B cell (primary cell): ENCODE measurements at regions of chr12 and their contacts with region 1.

Region 1: GRCh38 chr12:53321074-53321814 is at the start of gene AAAS:
- DNase-seq: peak; percentile 97
- ATAC-seq: peak; percentile 81
- H3K4me3 ChIP-seq: peak within 1 kb of the TSS; percentile 31 to 95 (median 87)
- H3K4me3 Mint-ChIP-seq: peak within 1 kb of the TSS; percentile 99
- H3K27ac ChIP-seq: peak within 1 kb of the TSS; percentile 73 to 84
- H3K27ac Mint-ChIP-seq: peak within 1 kb of the TSS; percentile 99
- H3K4me1 ChIP-seq: peaks cover 26 to 36% of the 10 kb centered on the region in 2 donors
- H3K4me1 Mint-ChIP-seq: peaks cover 39% of the 10 kb centered on the region
- H3K27me3 ChIP-seq: no peaks in the 10 kb centered on the region
- H3K27me3 Mint-ChIP-seq: no peaks in the 10 kb centered on the region
- CTCF ChIP-seq: peak; percentile 99
- total RNA-seq, gene AAAS: 65.1 and 68.4 TPM in 2 replicates

Region 2: DNA sequence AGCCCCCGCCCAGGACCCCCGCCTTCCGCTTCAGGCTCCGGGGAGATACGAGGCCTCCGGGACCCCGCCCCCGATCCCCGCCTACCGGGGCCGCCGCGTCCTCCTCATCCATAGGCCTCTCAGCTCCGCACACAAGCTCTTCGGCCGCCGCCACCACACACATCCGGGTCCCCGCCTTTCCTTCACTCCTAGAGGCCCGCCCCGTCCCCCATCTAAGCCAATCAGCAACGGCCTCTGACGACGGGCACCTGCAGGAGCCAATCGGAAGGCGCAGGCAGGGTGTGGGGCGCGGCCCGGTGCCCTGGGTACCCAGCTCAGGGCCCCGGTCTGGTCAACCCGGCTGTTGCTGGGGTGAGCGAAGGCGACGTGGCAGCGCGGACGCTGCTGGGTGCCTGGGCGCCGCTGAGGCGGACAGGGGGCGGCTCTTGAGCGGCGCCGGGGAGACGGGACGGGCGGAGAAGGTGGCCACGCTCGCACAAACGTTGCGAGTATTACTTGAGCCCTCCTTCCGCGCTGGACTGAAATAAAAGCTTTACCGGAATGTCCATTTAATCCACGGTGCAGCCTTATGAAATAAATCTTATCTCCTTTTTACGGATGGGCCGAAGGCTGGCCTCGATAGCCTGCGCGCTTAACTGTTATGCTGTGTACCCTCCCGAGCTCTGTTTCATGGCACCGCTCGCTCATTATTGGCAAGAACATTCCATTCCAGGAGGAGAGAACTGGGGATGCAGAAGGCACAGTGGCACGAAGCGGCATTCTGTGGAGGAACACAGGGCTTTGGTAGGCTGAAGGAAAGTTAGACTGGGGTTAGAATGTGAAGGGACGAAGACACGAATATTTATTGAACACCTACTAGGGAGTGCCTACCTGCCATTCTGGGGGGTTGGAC is 241.8 kb before region 1 on chr12 and contains the start of gene SPRYD3:
- CTCF ChIA-PET with region 1: interaction called, 6 read pairs
- POLR2A ChIA-PET with region 1: no interaction called
- intact Hi-C with region 1: loop called (anchors 10 kb)
- DNase-seq: peak; percentile 97
- ATAC-seq: peak; percentile 98
- H3K4me3 ChIP-seq: peak within 1 kb of the TSS; percentile 65 to 98 (median 80)
- H3K4me3 Mint-ChIP-seq: peak within 1 kb of the TSS; percentile 95
- H3K27ac ChIP-seq: peak within 1 kb of the TSS; percentile 51 to 75
- H3K27ac Mint-ChIP-seq: peak within 1 kb of the TSS; percentile 95
- H3K4me1 ChIP-seq: peaks cover 10 to 17% of the 10 kb centered on the region in 2 donors
- H3K4me1 Mint-ChIP-seq: peaks cover 28% of the 10 kb centered on the region
- H3K27me3 ChIP-seq: peaks cover 0 to 8% (median 0%) of the 10 kb centered on the region in 4 experiments
- H3K27me3 Mint-ChIP-seq: peaks cover 4% of the 10 kb centered on the region
- CTCF ChIP-seq: no peak
- total RNA-seq, gene SPRYD3: 39.8 and 43.3 TPM in 2 replicates

Region 3: GRCh38 chr12:53213348-53213747 is 107.9 kb before region 1 on chr12:
- CTCF ChIA-PET with region 1: interaction called, 123 read pairs
- POLR2A ChIA-PET with region 1: interaction called, 3 read pairs
- intact Hi-C with region 1: loop called (anchors 2 kb)
- DNase-seq: peak; percentile 87
- ATAC-seq: peak; percentile 65
- H3K4me3 ChIP-seq: no peak overlapping the region
- H3K4me3 Mint-ChIP-seq: no peak overlapping the region
- H3K27ac ChIP-seq: no peak overlapping the region
- H3K27ac Mint-ChIP-seq: peak overlapping the region; percentile 46
- H3K4me1 ChIP-seq: peaks cover 57 to 65% of the 10 kb centered on the region in 2 donors
- H3K4me1 Mint-ChIP-seq: peaks cover 70% of the 10 kb centered on the region
- H3K27me3 ChIP-seq: no peaks in the 10 kb centered on the region
- H3K27me3 Mint-ChIP-seq: no peaks in the 10 kb centered on the region
- CTCF ChIP-seq: peak; percentile 97

Region 4: GRCh38 chr12:53267999-53268647 is 53.1 kb before region 1 on chr12 and contains the start of gene ESPL1:
- CTCF ChIA-PET with region 1: interaction called, 29 read pairs
- POLR2A ChIA-PET with region 1: interaction called, 8 read pairs
- intact Hi-C with region 1: loop called (anchors 1 kb)
- DNase-seq: peak; percentile 92
- ATAC-seq: peak; percentile 93
- H3K4me3 ChIP-seq: peak within 1 kb of the TSS; percentile 63 to 90 (median 70)
- H3K4me3 Mint-ChIP-seq: peak within 1 kb of the TSS; percentile 97
- H3K27ac ChIP-seq: peak within 1 kb of the TSS; percentile 68 to 92
- H3K27ac Mint-ChIP-seq: peak within 1 kb of the TSS; percentile 87
- H3K4me1 ChIP-seq: peaks cover 13 to 20% of the 10 kb centered on the region in 2 donors
- H3K4me1 Mint-ChIP-seq: peaks cover 21% of the 10 kb centered on the region
- H3K27me3 ChIP-seq: no peaks in the 10 kb centered on the region
- H3K27me3 Mint-ChIP-seq: no peaks in the 10 kb centered on the region
- CTCF ChIP-seq: peak; percentile 49
- total RNA-seq, gene ESPL1: 1.7 and 2.4 TPM in 2 replicates

Region 5: DNA sequence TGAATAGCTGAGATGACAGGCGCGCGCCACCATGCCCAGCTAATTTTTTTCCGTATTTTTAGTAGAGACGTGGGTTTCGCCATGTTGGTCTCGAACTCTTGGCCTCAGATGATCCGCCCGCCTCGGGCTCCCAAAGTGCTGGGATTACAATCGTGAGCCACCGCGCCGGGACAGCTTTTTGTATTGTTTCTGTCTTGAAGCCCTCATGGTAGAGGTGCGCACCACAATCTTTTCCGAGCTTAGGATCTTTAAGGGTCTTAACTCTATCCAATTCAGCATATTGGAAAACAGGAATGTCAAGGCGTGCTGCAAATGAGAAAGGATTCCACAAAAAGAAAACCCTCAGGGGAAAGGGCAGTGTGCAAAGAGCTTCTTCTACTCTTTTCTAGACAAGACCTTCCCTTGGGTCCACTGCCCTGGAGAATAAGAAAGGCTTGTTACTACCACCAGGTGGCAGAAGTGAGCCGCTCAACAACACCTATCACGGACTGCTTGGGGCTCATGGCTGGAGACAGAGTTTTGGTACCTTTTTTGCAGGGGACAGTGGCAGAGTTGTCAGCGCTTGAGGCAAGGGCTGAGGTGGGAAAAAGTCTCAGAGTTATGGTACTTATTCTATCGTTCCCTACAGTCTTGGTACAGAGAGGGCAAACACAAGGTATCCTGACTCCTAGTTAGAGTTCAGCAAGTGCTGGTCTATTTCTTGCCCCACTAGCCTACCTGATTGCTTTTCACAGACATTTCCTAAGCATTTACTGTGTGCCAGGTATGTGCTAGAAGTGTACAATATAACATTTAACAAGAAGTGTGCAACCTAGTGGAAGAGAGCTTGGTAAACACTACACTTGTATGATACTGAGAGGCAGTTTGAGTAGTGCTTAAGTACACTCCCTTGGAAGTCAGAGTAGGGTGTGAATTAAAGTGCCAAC is 31.4 kb after region 1 on chr12:
- CTCF ChIA-PET with region 1: interaction called, 353 read pairs
- POLR2A ChIA-PET with region 1: interaction called, 5 read pairs
- intact Hi-C with region 1: loop called (anchors 2 kb)
- DNase-seq: peak; percentile 91
- ATAC-seq: peak; percentile 100
- H3K4me3 ChIP-seq: no peak overlapping the region
- H3K4me3 Mint-ChIP-seq: no peak overlapping the region
- H3K27ac ChIP-seq: no peak overlapping the region
- H3K27ac Mint-ChIP-seq: peak overlapping the region; percentile 61
- H3K4me1 ChIP-seq: peaks cover 4 to 5% of the 10 kb centered on the region in 2 donors
- H3K4me1 Mint-ChIP-seq: peaks cover 6% of the 10 kb centered on the region
- H3K27me3 ChIP-seq: no peaks in the 10 kb centered on the region
- H3K27me3 Mint-ChIP-seq: no peaks in the 10 kb centered on the region
- CTCF ChIP-seq: peak; percentile 87

Region 6: GRCh38 chr12:53441040-53441833 is 120.0 kb after region 1 on chr12 and contains the start of gene PRR13:
- CTCF ChIA-PET with region 1: interaction called, 3 read pairs
- POLR2A ChIA-PET with region 1: interaction called, 4 read pairs
- intact Hi-C with region 1: loop called (anchors 1 kb)
- DNase-seq: peak; percentile 98
- ATAC-seq: peak; percentile 97
- H3K4me3 ChIP-seq: peak within 1 kb of the TSS; percentile 85 to 99 (median 94)
- H3K4me3 Mint-ChIP-seq: peak within 1 kb of the TSS; percentile 97
- H3K27ac ChIP-seq: peak within 1 kb of the TSS; percentile 62 to 93
- H3K27ac Mint-ChIP-seq: peak within 1 kb of the TSS; percentile 99
- H3K4me1 ChIP-seq: peaks cover 21 to 25% of the 10 kb centered on the region in 2 donors
- H3K4me1 Mint-ChIP-seq: peaks cover 40% of the 10 kb centered on the region
- H3K27me3 ChIP-seq: no peaks in the 10 kb centered on the region
- H3K27me3 Mint-ChIP-seq: no peaks in the 10 kb centered on the region
- CTCF ChIP-seq: no peak
- total RNA-seq, gene PRR13: 200 and 213 TPM in 2 replicates

Region 7: DNA sequence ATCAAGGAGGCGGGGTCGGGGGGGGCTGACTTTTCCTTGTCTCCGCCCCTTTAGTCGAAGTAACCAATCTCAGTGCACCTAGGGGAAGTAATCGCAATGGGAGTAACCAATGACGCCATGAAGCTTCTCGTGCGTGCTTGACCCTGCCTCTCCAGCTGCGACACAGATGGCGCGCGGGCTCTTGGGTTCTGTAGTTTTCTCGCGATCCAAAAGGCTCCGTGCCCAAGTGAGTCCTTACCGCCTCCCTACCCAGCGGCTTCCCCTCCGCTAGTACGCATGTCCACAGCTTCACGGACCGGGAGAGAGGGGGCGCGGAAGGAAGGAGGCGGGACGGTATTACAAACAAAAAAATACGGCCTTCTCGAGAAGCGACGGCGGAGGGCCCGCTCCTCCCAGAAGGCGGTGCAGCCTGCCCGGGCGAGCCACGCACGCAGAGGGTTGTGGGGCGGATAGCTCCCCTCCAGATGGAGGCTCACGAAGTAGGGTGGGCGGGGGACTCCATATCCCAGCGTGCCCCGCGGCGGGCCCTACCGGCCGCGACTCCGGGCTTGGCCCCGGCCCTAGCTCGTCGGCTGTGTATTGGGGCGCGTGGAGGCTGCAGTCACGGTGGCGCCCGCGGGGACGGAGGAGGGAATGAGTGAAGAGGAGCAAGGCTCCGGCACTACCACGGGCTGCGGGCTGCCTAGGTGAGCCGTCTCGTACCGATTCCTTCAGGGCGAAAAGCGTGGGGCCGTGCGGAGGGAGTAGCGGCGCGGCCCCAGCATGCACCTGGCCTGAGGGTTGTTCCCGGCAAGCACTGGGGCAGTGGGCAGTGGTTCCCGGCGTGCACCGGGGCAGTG is 179.8 kb after region 1 on chr12 and contains the start of gene TARBP2:
- CTCF ChIA-PET with region 1: interaction called, 10 read pairs
- POLR2A ChIA-PET with region 1: interaction called, 6 read pairs
- intact Hi-C with region 1: no loop called
- DNase-seq: peak; percentile 99
- ATAC-seq: peak; percentile 79
- H3K4me3 ChIP-seq: peak within 1 kb of the TSS; percentile 65 to 94 (median 76)
- H3K4me3 Mint-ChIP-seq: peak within 1 kb of the TSS; percentile 92
- H3K27ac ChIP-seq: peak within 1 kb of the TSS; percentile 95 to 97
- H3K27ac Mint-ChIP-seq: peak within 1 kb of the TSS; percentile 97
- H3K4me1 ChIP-seq: peaks cover 22 to 28% of the 10 kb centered on the region in 2 donors
- H3K4me1 Mint-ChIP-seq: peaks cover 29% of the 10 kb centered on the region
- H3K27me3 ChIP-seq: no peaks in the 10 kb centered on the region
- H3K27me3 Mint-ChIP-seq: no peaks in the 10 kb centered on the region
- CTCF ChIP-seq: no peak
- total RNA-seq, gene TARBP2: 36.3 and 41.6 TPM in 2 replicates